ENCODE measurements at regions of chr16 and their contacts with region 1.

Region 1: DNA sequence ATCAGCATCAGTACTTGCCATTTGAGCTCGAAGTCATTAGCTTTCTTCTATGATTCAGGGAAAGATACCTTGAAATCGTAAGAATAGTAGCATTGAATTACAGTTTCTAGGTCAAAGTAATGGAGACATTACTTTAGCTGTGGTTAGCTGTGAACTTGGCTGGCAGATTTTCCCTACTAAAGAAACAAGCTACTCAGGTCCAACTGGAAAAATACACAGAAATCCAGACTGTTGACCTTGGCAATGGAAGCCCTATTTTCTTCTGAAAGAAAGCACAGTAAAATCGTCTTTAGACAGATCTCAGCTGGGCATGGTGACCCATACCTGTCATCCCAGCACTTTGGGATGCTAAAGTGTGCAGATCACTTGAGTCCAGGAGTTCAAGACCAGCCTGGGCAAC is 13.4 kb upstream of the DNAJA2 start:
- DNase-seq: peak; percentile 32
- H3K4me3 ChIP-seq: no peak overlapping the region
- H3K27ac ChIP-seq: no peak overlapping the region
- H3K4me1 ChIP-seq: no peaks in the 10 kb centered on the region
- H3K27me3 ChIP-seq: no peaks in the 10 kb centered on the region
- CTCF ChIP-seq: no peak
- EP300 ChIP-seq: no peak
- RAD21 ChIP-seq: no peak

Region 2: DNA sequence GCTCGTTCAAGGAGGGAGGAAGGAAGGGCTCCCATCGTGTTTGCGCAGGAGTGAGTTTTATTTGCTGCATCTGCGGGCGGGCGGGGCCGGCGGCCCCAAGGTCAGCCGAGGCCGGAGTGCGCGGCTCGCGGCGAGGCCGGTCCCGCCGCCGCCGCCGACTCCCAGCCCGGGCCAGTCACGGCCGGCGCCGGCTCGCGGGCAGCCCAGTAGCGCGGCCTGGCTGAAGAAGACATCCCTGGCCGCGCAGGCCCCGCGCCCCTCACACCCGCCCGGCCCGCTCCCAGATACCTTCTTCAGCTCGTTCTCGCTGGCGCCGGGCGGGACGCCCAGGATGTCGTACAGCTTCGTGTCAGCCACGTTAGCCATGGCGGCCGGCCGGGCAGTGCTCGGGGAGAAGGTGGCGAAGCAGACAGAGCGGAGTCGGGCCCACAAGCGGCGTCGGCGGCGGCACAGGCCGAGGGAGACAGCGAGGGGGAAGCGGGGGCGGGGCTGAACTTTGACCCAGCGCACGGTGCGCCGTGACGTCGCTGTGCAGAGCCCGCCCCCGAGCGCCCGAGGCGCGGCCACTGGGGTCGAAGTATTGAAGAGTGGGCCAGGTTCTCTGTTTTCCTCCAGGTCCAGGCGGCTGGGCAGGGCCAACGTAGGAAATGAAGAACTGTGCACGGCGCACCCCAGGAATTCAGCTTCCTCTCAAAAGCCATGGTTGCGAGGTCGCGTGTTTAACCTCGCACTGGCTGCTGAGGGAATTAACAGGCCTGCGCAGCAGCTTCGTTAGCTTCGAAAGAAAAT is 13.5 kb before region 1 on chr16 and contains the start of gene DNAJA2:
- CTCF ChIA-PET with region 1: interaction called, 4 read pairs
- POLR2A ChIA-PET with region 1: interaction called, 11 read pairs
- DNase-seq: peak; percentile 96
- H3K4me3 ChIP-seq: peak within 1 kb of the TSS; percentile 91 to 95
- H3K27ac ChIP-seq: peak within 1 kb of the TSS; percentile 86 to 98
- H3K4me1 ChIP-seq: peaks cover 10 to 13% of the 10 kb centered on the region in 2 experiments; a peak in 3 of 4 replicates
- H3K27me3 ChIP-seq: no peaks in the 10 kb centered on the region
- CTCF ChIP-seq: no peak
- EP300 ChIP-seq: peak in 1 of 2 experiments; percentile 10; a peak in 1 of 4 replicates
- RAD21 ChIP-seq: no peak
- polyA plus RNA-seq, gene DNAJA2: 9.7 and 12.8 TPM in 2 replicates

Measured in SK-N-SH (cell line).